ENCODE measurements at regions of chr5 and their contacts with region 1.

Region 1: GRCh38 chr5:126981701-126982100 is 48.7 kb downstream of the MARCHF3 start:
- DNase-seq: no peak
- H3K4me3 Mint-ChIP-seq: no peak overlapping the region
- H3K27ac Mint-ChIP-seq: no peak overlapping the region
- H3K4me1 Mint-ChIP-seq: no peaks in the 10 kb centered on the region
- H3K27me3 Mint-ChIP-seq: no peaks in the 10 kb centered on the region
- CTCF ChIP-seq: no peak

Region 2: DNA sequence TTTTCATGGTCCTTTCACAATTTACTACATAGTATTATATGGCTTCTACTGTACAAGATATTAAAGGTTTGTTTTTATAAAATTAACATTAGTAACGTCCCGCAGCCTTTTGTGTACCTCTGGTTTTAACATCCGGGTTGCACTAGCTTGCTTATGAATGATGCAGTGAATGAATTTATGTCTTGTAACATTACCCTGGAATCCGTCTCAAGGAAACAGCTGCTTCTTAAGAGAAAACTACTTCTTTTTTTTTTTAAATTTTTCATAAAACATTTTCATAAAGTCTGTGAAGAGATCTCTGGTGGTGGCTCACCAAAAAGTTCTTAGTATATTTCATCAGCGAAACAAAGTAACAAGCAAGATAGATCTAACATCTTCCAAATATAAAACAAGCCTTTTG is 25.0 kb after region 1 on chr5:
- CTCF ChIA-PET with region 1: no interaction called
- POLR2A ChIA-PET with region 1: no interaction called
- intact Hi-C with region 1: loop called (anchors 1 kb)
- DNase-seq: no peak
- H3K4me3 Mint-ChIP-seq: no peak overlapping the region
- H3K27ac Mint-ChIP-seq: no peak overlapping the region
- H3K4me1 Mint-ChIP-seq: peaks cover 5% of the 10 kb centered on the region
- H3K27me3 Mint-ChIP-seq: no peaks in the 10 kb centered on the region
- CTCF ChIP-seq: no peak

Measured in MCF 10A (cell line).